Ascending aorta (tissue), 2 donors: ENCODE measurements at regions of chr10 and their contacts with region 1.

Region 1: GRCh38 chr10:128069351-128070051 is 56.7 kb downstream of the MKI67 start:
- DNase-seq: peak in 1 of 2 donors; percentile 80
- H3K4me3 ChIP-seq: no peak overlapping the region
- H3K27ac ChIP-seq: no peak overlapping the region
- H3K4me1 ChIP-seq: peaks cover 4 to 7% of the 10 kb centered on the region in 2 donors
- H3K27me3 ChIP-seq: no peaks in the 10 kb centered on the region
- CTCF ChIP-seq: peak; percentile 77 to 84 (median 84)

Region 2: GRCh38 chr10:127889605-127890195 is 179.8 kb before region 1 on chr10:
- intact Hi-C with region 1: no loop called
- DNase-seq: no peak
- H3K4me3 ChIP-seq: no peak overlapping the region
- H3K27ac ChIP-seq: peak overlapping the region in 1 of 2 donors; percentile 33
- H3K4me1 ChIP-seq: no peaks in the 10 kb centered on the region
- H3K27me3 ChIP-seq: no peaks in the 10 kb centered on the region
- CTCF ChIP-seq: no peak

Region 3: GRCh38 chr10:128035557-128035973 is 33.9 kb before region 1 on chr10:
- intact Hi-C with region 1: loop called (anchors 1 kb)
- DNase-seq: peak in 1 of 2 donors; percentile 79
- H3K4me3 ChIP-seq: no peak overlapping the region
- H3K27ac ChIP-seq: peak overlapping the region in 1 of 2 donors; percentile 71
- H3K4me1 ChIP-seq: peaks cover 0 to 16% of the 10 kb centered on the region in 2 donors
- H3K27me3 ChIP-seq: no peaks in the 10 kb centered on the region
- CTCF ChIP-seq: peak; percentile 85 to 92 (median 85)